Activated CD4-positive, alpha-beta T cell treated with anti-CD3 and anti-CD28 coated beads for 36 hours (primary cell): ENCODE measurements at regions of chr17 and their contacts with region 1.

Region 1: DNA sequence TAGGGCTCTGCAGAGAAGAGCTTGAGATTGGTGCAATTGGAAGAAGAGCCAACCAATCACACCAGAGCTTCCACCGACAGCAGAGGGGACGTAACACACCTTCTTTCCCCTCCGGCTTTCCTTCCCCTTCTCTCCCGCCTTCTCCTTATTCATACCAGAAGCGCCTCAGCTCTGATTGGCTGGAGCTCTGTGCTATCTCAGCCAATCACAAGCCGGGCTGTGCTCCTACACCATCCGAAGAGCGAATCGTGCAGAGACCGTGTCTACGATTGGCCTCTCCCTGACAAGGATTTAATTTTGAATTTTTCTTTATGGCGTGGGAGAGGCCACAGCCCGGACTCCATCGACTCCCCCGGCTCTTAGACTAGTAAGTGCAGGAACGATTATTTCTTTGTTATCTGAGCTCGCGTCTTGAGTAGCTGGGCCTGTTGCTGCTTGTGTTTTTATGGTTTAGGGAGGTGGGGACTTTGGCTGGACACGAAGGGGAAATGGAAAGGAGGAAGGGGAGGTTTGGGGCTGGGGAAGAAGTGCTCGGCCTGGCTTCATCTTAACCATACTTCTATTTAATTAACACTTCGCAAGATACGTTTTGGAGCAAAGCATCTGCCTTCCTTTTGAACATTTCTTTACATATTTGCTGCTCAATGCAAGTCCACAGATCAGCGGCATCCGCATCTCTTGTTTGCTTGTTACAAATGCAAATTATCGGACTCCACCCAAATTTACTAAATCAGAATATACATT is at the start of gene PRR11:
- DNase-seq: peak; percentile 96
- ATAC-seq: peak; percentile 89
- H3K4me3 Mint-ChIP-seq: no peak within 1 kb of the TSS
- H3K27ac Mint-ChIP-seq: no peak within 1 kb of the TSS
- H3K4me1 Mint-ChIP-seq: peaks cover 37% of the 10 kb centered on the region
- H3K27me3 Mint-ChIP-seq: no peaks in the 10 kb centered on the region
- total RNA-seq, gene PRR11: 73.6 to 95.9 TPM

Region 2: GRCh38 chr17:58352014-58352842 is 803.4 kb before region 1 on chr17 and contains the start of gene SUPT4H1:
- CTCF ChIA-PET with region 1: no interaction called
- POLR2A ChIA-PET with region 1: no interaction called
- intact Hi-C with region 1: loop called in 1 of 2 experiments (anchors 1 kb)
- DNase-seq: peak; percentile 96
- ATAC-seq: peak; percentile 78
- H3K4me3 Mint-ChIP-seq: peak within 1 kb of the TSS; percentile 97
- H3K27ac Mint-ChIP-seq: peak within 1 kb of the TSS; percentile 98
- H3K4me1 Mint-ChIP-seq: peaks cover 38% of the 10 kb centered on the region
- H3K27me3 Mint-ChIP-seq: no peaks in the 10 kb centered on the region
- total RNA-seq, gene SUPT4H1: 106 to 129 TPM

Region 3: GRCh38 chr17:58692239-58693055 is 463.2 kb before region 1 on chr17 and contains the start of gene RAD51C:
- CTCF ChIA-PET with region 1: no interaction called
- POLR2A ChIA-PET with region 1: no interaction called
- intact Hi-C with region 1: loop called in 1 of 2 experiments (anchors 1 kb)
- DNase-seq: peak; percentile 94
- ATAC-seq: peak; percentile 96
- H3K4me3 Mint-ChIP-seq: peak within 1 kb of the TSS; percentile 92
- H3K27ac Mint-ChIP-seq: peak within 1 kb of the TSS; percentile 98
- H3K4me1 Mint-ChIP-seq: peaks cover 27% of the 10 kb centered on the region
- H3K27me3 Mint-ChIP-seq: no peaks in the 10 kb centered on the region
- total RNA-seq, gene RAD51C: 85.4 to 87.2 TPM

Region 4: DNA sequence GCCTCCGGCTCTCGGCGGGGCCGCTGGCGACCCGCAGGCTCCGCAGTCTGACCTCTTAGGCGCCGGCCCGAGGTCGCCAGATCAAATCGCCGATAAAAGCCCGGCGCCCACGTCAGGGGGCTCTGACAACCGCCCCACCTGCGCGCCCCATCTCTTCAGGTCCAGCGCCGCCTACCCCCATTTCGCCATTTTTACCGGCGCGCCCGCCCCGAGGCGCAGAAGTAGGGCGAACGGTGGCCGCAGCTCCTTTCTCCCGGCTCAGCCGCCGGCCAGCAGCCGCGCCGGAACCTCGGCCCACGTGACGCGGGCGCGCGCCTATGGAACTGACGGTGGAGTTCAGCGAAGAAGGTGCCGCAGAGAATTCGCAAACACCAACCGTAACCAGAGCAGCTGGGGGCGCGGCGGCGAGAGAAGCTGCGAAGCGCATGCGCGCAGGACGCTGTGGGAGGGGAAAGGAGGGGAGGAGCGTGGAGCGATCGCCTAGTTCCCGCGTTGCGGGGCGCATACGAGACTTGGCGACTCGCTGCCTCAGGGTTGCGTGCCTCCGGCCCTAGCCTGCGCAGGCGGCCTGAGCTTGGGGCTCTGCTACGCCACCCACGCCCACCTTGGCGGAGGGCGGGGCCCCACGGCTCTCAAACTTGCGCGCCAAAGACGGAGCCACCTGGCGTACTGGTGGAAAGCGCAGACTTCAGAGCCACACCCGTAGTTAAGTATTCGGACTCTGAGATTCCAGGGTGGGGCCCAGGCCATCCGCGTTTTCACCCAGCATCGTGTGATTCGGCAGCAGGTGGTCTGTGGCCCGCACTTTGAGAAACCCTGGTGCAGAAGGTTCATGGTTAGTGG is 48.9 kb before region 1 on chr17 and contains the start of gene TRIM37:
- CTCF ChIA-PET with region 1: interaction called, 6 read pairs
- POLR2A ChIA-PET with region 1: interaction called, 27 read pairs
- intact Hi-C with region 1: loop called (anchors 1 kb)
- DNase-seq: peak; percentile 99
- ATAC-seq: peak; percentile 95
- H3K4me3 Mint-ChIP-seq: peak within 1 kb of the TSS; percentile 85
- H3K27ac Mint-ChIP-seq: peak within 1 kb of the TSS; percentile 92
- H3K4me1 Mint-ChIP-seq: peaks cover 49% of the 10 kb centered on the region
- H3K27me3 Mint-ChIP-seq: no peaks in the 10 kb centered on the region
- total RNA-seq, gene TRIM37: 21.3 to 22.7 TPM

Region 5: GRCh38 chr17:59565171-59565969 is 409.8 kb after region 1 on chr17 and contains the start of gene DHX40:
- CTCF ChIA-PET with region 1: interaction called, 3 read pairs
- POLR2A ChIA-PET with region 1: no interaction called
- intact Hi-C with region 1: loop called (anchors 1 to 10 kb)
- DNase-seq: peak; percentile 98
- ATAC-seq: peak; percentile 89
- H3K4me3 Mint-ChIP-seq: peak within 1 kb of the TSS; percentile 99
- H3K27ac Mint-ChIP-seq: peak within 1 kb of the TSS; percentile 99
- H3K4me1 Mint-ChIP-seq: peaks cover 20% of the 10 kb centered on the region
- H3K27me3 Mint-ChIP-seq: no peaks in the 10 kb centered on the region
- total RNA-seq, gene DHX40: 22.9 to 24.1 TPM